ENCODE measurements at regions of chr15 and their contacts with region 1.

Region 1: DNA sequence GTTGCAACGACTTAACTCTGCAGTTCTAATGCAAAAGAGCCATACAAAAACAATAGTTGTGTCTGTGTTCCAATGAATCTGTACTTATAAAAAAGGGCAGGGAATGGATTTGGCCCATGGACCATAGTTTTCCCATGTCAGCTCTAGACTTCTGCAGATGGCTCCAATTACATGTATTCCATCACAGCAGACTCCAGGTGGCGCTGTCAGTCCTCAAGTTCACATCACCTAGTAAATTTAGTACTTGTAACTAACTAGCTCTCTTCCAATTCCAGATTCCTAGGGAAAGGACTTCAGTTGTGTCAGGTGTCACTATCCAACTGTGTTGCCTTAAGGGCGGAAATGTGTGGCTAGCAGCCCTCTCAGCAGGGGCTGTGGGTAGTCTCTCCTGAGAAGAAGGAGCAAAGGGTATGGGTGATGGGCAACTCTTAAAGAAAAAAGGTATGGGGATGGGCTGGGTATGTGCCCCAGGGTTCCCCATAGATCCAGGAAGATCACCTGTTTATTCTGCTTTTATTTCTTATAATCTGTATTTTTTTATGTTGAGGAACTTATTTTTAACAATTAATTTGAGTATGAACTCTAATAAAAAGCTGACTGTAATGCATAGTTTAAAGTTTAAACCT is 36.2 kb downstream of the BBS4 start:
- DNase-seq: peak; percentile 34
- ATAC-seq: peak; percentile 79
- H3K4me3 ChIP-seq: no peak overlapping the region
- H3K27ac ChIP-seq: no peak overlapping the region
- H3K4me1 ChIP-seq: no peaks in the 10 kb centered on the region
- H3K27me3 ChIP-seq: no peaks in the 10 kb centered on the region
- CTCF ChIP-seq: peak; percentile 72 to 87 (median 82); a peak in 5 of 6 replicates
- EP300 ChIP-seq: no peak
- POLR2A ChIP-seq: no peak
- RAD21 ChIP-seq: peak; percentile 87

Region 2: GRCh38 chr15:72706266-72706665 is 15.9 kb before region 1 on chr15:
- CTCF ChIA-PET with region 1: interaction called, 38 read pairs
- POLR2A ChIA-PET with region 1: no interaction called
- RAD21 ChIA-PET with region 1: no interaction called
- SMC1A ChIA-PET with region 1: interaction called, 4 read pairs
- in situ Hi-C with region 1: no loop called
- intact Hi-C with region 1: no loop called
- DNase-seq: no peak
- ATAC-seq: no peak
- H3K4me3 ChIP-seq: no peak overlapping the region
- H3K27ac ChIP-seq: no peak overlapping the region
- H3K4me1 ChIP-seq: no peaks in the 10 kb centered on the region
- H3K27me3 ChIP-seq: no peaks in the 10 kb centered on the region
- CTCF ChIP-seq: no peak
- EP300 ChIP-seq: no peak
- POLR2A ChIP-seq: no peak
- RAD21 ChIP-seq: no peak

Region 3: GRCh38 chr15:72740219-72740618 is 18.0 kb after region 1 on chr15:
- CTCF ChIA-PET with region 1: interaction called, 46 read pairs
- POLR2A ChIA-PET with region 1: no interaction called
- RAD21 ChIA-PET with region 1: interaction called, 12 read pairs
- SMC1A ChIA-PET with region 1: interaction called, 18 read pairs
- in situ Hi-C with region 1: no loop called
- intact Hi-C with region 1: no loop called
- DNase-seq: peak; percentile 50
- ATAC-seq: peak; percentile 95
- H3K4me3 ChIP-seq: peak overlapping the region; percentile 22; the same call in 1 of the 2 replicates
- H3K27ac ChIP-seq: peak overlapping the region; percentile 77
- H3K4me1 ChIP-seq: peaks cover 19% of the 10 kb centered on the region
- H3K27me3 ChIP-seq: no peaks in the 10 kb centered on the region
- CTCF ChIP-seq: no peak
- EP300 ChIP-seq: no peak
- POLR2A ChIP-seq: no peak
- RAD21 ChIP-seq: no peak

Region 4: GRCh38 chr15:72774696-72775383 is 52.7 kb after region 1 on chr15:
- CTCF ChIA-PET with region 1: interaction called, 18 read pairs
- POLR2A ChIA-PET with region 1: no interaction called
- RAD21 ChIA-PET with region 1: interaction called, 3 read pairs
- SMC1A ChIA-PET with region 1: interaction called, 6 read pairs
- in situ Hi-C with region 1: no loop called
- intact Hi-C with region 1: loop called (anchors 5 kb)
- DNase-seq: no peak
- ATAC-seq: peak; percentile 41
- H3K4me3 ChIP-seq: peak overlapping the region; percentile 1; the same call in 1 of the 2 replicates
- H3K27ac ChIP-seq: peak overlapping the region; percentile 10; the same call in 1 of the 2 replicates
- H3K4me1 ChIP-seq: peaks cover 22% of the 10 kb centered on the region
- H3K27me3 ChIP-seq: no peaks in the 10 kb centered on the region
- CTCF ChIP-seq: no peak
- EP300 ChIP-seq: no peak
- POLR2A ChIP-seq: no peak
- RAD21 ChIP-seq: no peak

Region 5: GRCh38 chr15:72796515-72797337 is 74.5 kb after region 1 on chr15:
- CTCF ChIA-PET with region 1: interaction called, 21 read pairs
- POLR2A ChIA-PET with region 1: no interaction called
- RAD21 ChIA-PET with region 1: interaction called, 11 read pairs
- SMC1A ChIA-PET with region 1: no interaction called
- in situ Hi-C with region 1: no loop called
- intact Hi-C with region 1: no loop called
- DNase-seq: no peak
- ATAC-seq: peak; percentile 96
- H3K4me3 ChIP-seq: peak overlapping the region; percentile 25; the same call in 1 of the 2 replicates
- H3K27ac ChIP-seq: no peak overlapping the region
- H3K4me1 ChIP-seq: peaks cover 8% of the 10 kb centered on the region; the same call in 1 of the 2 replicates
- H3K27me3 ChIP-seq: peaks cover 0 to 3% of the 10 kb centered on the region in 2 experiments; a peak in 1 of 4 replicates
- CTCF ChIP-seq: peak; percentile 50 to 55 (median 52); a peak in 5 of 6 replicates
- EP300 ChIP-seq: no peak
- POLR2A ChIP-seq: no peak
- RAD21 ChIP-seq: peak; percentile 59

Region 6: GRCh38 chr15:72859017-72859756 is 137.0 kb after region 1 on chr15:
- CTCF ChIA-PET with region 1: no interaction called
- POLR2A ChIA-PET with region 1: no interaction called
- RAD21 ChIA-PET with region 1: no interaction called
- SMC1A ChIA-PET with region 1: no interaction called
- in situ Hi-C with region 1: no loop called
- intact Hi-C with region 1: no loop called
- DNase-seq: no peak
- ATAC-seq: no peak
- H3K4me3 ChIP-seq: no peak overlapping the region
- H3K27ac ChIP-seq: no peak overlapping the region
- H3K4me1 ChIP-seq: no peaks in the 10 kb centered on the region
- H3K27me3 ChIP-seq: no peaks in the 10 kb centered on the region; a peak in 1 of 4 replicates
- CTCF ChIP-seq: no peak
- EP300 ChIP-seq: no peak
- POLR2A ChIP-seq: no peak
- RAD21 ChIP-seq: no peak

Region 7: GRCh38 chr15:73075160-73075859 is 353.1 kb after region 1 on chr15:
- CTCF ChIA-PET with region 1: interaction called, 14 read pairs
- POLR2A ChIA-PET with region 1: no interaction called
- RAD21 ChIA-PET with region 1: interaction called, 6 read pairs
- SMC1A ChIA-PET with region 1: interaction called, 9 read pairs
- in situ Hi-C with region 1: loop called (anchors 5 kb)
- intact Hi-C with region 1: no loop called
- DNase-seq: no peak
- ATAC-seq: no peak
- H3K4me3 ChIP-seq: no peak overlapping the region
- H3K27ac ChIP-seq: no peak overlapping the region
- H3K4me1 ChIP-seq: no peaks in the 10 kb centered on the region
- H3K27me3 ChIP-seq: no peaks in the 10 kb centered on the region
- CTCF ChIP-seq: no peak
- EP300 ChIP-seq: no peak
- POLR2A ChIP-seq: no peak
- RAD21 ChIP-seq: no peak

Region 8: DNA sequence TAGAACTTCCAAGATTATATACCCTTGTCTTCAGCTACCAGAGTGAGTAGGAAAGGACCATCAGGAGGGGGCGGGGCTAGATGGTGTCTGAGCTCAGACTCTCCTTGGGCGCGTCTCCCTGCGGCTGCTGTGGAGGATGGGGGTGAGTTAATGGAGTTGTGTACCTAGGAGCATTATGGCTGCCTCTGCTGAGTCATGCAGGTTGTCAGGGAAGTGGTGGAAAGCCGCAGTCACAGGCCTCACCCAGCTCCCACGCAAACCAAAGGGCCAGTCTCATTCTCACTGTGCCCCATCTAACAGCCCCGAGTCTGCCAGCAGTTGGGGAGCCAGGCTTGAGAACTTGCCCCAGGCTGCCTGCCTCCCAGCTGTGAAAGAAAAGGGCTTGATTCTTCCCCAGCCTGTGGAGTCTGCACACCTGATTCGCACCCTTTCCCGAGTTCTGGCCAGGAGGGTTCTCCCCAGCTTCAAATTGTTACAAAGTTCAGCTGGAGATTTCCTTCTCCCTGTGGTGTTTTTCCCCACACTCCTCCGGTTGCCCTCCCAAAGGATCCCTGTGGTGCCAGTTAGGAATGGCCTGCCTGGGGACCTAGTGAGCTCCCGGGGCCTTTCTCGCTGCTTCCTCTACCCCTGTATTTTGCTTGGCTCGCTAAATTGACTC is 503.3 kb after region 1 on chr15:
- CTCF ChIA-PET with region 1: no interaction called
- POLR2A ChIA-PET with region 1: no interaction called
- RAD21 ChIA-PET with region 1: no interaction called
- SMC1A ChIA-PET with region 1: no interaction called
- in situ Hi-C with region 1: no loop called
- intact Hi-C with region 1: no loop called
- DNase-seq: no peak
- ATAC-seq: peak; percentile 59
- H3K4me3 ChIP-seq: no peak overlapping the region
- H3K27ac ChIP-seq: no peak overlapping the region
- H3K4me1 ChIP-seq: no peaks in the 10 kb centered on the region
- H3K27me3 ChIP-seq: no peaks in the 10 kb centered on the region
- CTCF ChIP-seq: no peak
- EP300 ChIP-seq: no peak
- POLR2A ChIP-seq: no peak
- RAD21 ChIP-seq: no peak

Region 9: DNA sequence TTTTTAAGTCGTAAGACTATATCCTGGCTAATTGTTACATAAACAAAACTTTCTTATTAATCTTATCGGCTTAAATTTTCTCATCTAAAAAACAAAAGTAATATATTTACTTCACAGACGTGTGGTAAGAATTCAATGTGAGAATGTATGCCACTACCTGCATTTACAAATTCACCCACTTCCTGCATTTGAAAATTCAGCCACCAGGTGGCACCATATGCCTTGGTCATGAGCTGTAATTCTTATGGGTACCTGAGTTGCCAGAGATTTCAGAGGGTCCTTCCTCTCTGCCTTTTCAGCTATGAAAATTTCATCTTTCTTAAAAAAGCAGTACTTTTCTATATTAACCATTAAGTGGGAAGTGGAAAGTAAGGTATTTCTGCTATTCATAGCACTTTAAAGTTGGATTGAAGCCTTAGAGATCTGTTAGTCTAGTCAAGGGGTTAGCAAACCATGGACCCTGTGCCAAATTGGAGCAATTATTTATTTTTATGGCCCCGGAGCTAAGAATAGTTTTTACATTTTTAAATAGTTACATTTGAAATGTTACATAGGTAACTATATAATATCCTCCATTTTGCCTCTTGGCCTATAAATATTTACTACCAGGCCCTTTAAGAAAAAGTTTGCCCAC is 518.8 kb after region 1 on chr15:
- CTCF ChIA-PET with region 1: interaction called, 14 read pairs
- POLR2A ChIA-PET with region 1: interaction called, 6 read pairs
- RAD21 ChIA-PET with region 1: interaction called, 8 read pairs
- SMC1A ChIA-PET with region 1: interaction called, 11 read pairs
- in situ Hi-C with region 1: no loop called
- intact Hi-C with region 1: loop called (anchors 2 kb)
- DNase-seq: peak; percentile 28
- ATAC-seq: peak; percentile 83
- H3K4me3 ChIP-seq: no peak overlapping the region
- H3K27ac ChIP-seq: no peak overlapping the region
- H3K4me1 ChIP-seq: no peaks in the 10 kb centered on the region
- H3K27me3 ChIP-seq: no peaks in the 10 kb centered on the region; a peak in 1 of 4 replicates
- CTCF ChIP-seq: peak; percentile 67 to 85 (median 80)
- EP300 ChIP-seq: no peak
- POLR2A ChIP-seq: no peak
- RAD21 ChIP-seq: peak; percentile 89